Activated T-helper 1 cell treated with anti-CD3 and anti-CD28 coated beads, Interleukin-12 subunit alpha, Interleukin-12 subunit beta, Interleukin-2, Interleukin-4 antibody, amounts not matched to agents 30 ng/mL and 10 ng/mL and 1 ng/mL, durations not matched to agents 14 hours and 24 hours and 36 hours (primary cell): ENCODE measurements at regions of chr1 and their contacts with region 1.

Region 1: GRCh38 chr1:66374561-66375111 is 159.3 kb upstream of the SGIP1 start:
- DNase-seq: peak; percentile 19
- H3K4me3 Mint-ChIP-seq: peak overlapping the region; percentile 77
- H3K27ac Mint-ChIP-seq: peak overlapping the region; percentile 96
- H3K4me1 Mint-ChIP-seq: peaks cover 69% of the 10 kb centered on the region
- H3K27me3 Mint-ChIP-seq: no peaks in the 10 kb centered on the region

Region 2: GRCh38 chr1:65235867-65236805 is 1138.5 kb before region 1 on chr1:
- intact Hi-C with region 1: loop called (anchors 10 kb)
- DNase-seq: no peak
- H3K4me3 Mint-ChIP-seq: no peak overlapping the region
- H3K27ac Mint-ChIP-seq: no peak overlapping the region
- H3K4me1 Mint-ChIP-seq: peaks cover 15% of the 10 kb centered on the region
- H3K27me3 Mint-ChIP-seq: peaks cover 2% of the 10 kb centered on the region

Region 3: DNA sequence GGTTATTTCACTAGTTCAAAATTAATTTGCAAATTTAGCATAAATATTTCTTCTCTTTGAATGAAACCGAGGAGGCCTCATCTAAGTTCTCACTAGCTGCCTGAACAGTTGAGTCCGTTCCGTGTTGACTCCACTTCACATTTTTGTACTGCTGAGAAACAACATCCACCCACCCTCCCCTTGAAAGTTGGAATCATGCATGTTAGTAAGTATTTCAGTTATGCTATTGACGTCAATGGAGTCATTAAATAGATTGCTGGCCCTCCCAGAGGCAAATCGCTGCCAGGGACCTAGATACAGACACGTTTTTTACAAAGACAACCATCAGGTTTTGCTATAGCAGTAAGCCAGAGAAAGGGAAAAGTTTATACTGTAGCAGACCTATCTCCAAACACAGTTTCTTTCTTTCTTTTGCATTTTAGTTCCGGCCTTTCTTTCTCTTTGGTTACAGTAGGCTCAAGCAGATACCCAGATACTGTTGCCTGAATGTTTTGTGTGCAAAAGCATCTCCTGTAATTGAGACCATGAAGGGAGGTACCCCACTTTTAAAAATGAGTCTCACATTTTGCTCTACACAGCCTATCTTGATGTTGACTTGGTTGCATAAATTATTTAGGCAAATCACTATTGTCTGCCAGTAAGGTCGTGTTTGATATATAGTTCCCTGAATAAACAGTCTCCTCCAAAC is 103.3 kb before region 1 on chr1:
- intact Hi-C with region 1: loop called (anchors 1 kb)
- DNase-seq: no peak
- H3K4me3 Mint-ChIP-seq: peak overlapping the region; percentile 38
- H3K27ac Mint-ChIP-seq: peak overlapping the region; percentile 85
- H3K4me1 Mint-ChIP-seq: peaks cover 67% of the 10 kb centered on the region
- H3K27me3 Mint-ChIP-seq: peaks cover 2% of the 10 kb centered on the region

Region 4: DNA sequence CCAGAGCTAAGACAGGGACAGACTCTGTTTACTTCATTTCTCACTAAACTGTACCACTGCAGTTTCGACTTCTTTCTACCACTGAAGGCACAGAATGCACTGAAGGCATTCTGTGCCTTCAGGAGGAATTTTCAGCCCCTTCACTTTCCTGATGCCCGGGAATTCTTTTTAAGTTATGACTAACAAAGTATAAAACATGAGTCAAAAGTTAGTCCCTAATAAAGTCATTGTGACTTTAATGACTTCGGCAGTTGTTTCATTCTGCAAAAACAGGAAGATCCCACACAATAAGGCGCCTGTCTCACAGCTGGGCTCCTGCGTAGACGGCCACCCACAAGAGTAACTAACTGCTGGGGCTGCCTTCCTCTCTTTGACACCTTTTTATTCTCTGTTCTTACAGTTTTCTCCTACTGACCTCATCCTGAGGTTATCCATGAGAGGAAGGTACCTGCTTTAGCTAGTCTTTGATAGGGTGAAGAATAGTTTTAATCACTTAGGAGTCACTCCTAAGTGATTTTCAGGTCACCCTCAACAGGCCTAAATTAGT is 24.6 kb before region 1 on chr1:
- intact Hi-C with region 1: loop called (anchors 1 kb)
- DNase-seq: no peak
- H3K4me3 Mint-ChIP-seq: peak overlapping the region; percentile 75
- H3K27ac Mint-ChIP-seq: peak overlapping the region; percentile 81
- H3K4me1 Mint-ChIP-seq: peaks cover 90% of the 10 kb centered on the region
- H3K27me3 Mint-ChIP-seq: no peaks in the 10 kb centered on the region

Region 5: DNA sequence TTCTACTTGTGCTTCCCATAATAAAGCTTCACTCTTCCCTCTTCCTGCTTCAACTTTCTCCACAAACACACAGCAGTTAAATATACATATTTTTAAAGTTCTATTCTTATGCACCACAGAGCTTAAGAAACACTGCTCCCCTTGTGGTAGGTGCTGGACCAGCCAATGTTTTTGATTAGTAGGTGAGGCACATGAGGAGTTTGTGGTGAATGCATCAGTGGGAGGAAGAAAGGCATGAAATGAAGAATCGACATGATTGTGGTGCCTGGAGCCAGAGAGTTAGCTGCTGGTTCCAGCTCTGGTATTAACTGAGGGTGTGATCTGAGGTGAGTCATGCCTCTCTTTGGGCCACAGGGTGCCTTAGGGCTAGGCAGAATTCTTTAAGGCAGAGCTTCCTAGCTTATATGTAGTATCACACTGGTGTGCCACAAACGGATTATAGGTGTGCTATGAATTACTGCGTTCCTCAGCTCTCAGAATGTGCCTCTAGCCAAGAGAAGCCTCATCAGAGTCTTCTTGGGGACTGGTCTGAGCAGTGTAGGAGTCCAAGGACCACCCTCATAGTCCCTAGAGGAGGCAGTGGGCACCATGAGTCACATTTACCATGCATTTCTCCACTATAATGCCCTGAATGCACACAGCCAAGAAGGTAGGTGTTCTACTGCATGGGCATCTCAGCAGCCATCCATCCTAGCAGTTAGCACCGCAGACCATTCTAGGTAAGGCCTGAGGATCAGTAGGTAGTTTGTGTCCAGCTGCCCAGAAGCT is 61.9 kb after region 1 on chr1:
- intact Hi-C with region 1: loop called (anchors 1 kb)
- DNase-seq: peak; percentile 34
- H3K4me3 Mint-ChIP-seq: no peak overlapping the region
- H3K27ac Mint-ChIP-seq: peak overlapping the region; percentile 2
- H3K4me1 Mint-ChIP-seq: peaks cover 45% of the 10 kb centered on the region
- H3K27me3 Mint-ChIP-seq: no peaks in the 10 kb centered on the region

Region 6: DNA sequence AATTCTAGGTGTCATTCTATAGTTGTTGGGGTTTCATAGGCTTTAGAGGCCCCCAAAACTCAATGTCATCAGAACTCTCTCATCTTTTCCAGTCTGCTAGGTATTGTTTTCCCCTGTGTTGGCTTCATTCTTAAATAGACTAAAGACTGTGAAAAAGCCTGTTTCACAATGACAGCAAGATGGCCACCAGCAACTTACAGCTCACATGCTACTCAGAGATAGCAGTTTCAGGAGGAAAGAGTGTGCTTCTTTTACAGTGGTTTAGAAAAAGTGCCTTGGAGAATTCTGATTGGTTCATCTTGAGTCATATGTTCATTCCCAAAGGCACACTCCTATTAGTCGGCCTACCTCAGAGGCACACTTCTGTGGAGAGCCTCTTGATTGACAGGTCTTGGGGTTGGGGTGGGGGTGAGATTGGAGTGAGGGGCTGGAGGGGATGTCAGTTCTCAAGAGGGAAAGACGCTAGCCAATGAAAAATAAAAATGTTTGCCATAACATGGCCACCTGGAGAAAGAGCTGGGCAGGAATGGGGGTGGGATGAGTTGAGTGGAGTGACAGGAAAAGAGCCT is 800.2 kb after region 1 on chr1:
- intact Hi-C with region 1: loop called (anchors 5 kb)
- DNase-seq: no peak
- H3K4me3 Mint-ChIP-seq: peak overlapping the region; percentile 76
- H3K27ac Mint-ChIP-seq: peak overlapping the region; percentile 98
- H3K4me1 Mint-ChIP-seq: peaks cover 68% of the 10 kb centered on the region
- H3K27me3 Mint-ChIP-seq: no peaks in the 10 kb centered on the region